RWPE1 (cell line): ENCODE measurements at regions of chr7 and their contacts with region 1.

Region 1: DNA sequence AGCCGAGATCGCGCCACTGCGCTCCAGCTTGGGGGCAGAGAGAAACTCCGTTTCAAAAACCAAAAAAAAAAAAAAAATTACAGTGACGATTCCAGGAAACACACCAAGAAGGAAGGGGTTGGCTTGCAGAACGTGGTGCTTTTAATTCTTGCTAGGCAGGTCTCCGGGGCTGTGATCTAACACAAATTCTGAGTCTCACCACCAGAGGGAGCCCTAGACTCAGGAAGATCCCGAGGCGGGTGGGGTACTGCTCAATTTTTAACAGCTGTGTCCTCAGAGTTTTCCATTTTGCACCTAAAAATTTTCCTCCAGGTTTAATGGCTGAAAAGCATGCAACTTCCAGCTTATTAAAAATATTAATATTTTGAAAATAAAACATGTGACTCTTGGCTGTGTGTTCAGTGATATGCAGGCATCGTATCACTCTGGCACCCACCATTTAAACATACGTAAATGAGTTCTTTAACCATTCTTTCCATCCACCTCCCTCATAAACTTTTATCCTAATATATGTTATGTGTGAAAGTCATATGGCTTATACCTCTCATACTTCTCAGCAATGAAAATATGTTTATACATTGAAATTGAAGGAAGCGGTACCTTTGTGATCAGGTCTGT is 26.5 kb upstream of the NUB1 start:
- DNase-seq: peak; percentile 62
- H3K27ac ChIP-seq: no peak overlapping the region
- CTCF ChIP-seq: peak; percentile 89

Region 2: DNA sequence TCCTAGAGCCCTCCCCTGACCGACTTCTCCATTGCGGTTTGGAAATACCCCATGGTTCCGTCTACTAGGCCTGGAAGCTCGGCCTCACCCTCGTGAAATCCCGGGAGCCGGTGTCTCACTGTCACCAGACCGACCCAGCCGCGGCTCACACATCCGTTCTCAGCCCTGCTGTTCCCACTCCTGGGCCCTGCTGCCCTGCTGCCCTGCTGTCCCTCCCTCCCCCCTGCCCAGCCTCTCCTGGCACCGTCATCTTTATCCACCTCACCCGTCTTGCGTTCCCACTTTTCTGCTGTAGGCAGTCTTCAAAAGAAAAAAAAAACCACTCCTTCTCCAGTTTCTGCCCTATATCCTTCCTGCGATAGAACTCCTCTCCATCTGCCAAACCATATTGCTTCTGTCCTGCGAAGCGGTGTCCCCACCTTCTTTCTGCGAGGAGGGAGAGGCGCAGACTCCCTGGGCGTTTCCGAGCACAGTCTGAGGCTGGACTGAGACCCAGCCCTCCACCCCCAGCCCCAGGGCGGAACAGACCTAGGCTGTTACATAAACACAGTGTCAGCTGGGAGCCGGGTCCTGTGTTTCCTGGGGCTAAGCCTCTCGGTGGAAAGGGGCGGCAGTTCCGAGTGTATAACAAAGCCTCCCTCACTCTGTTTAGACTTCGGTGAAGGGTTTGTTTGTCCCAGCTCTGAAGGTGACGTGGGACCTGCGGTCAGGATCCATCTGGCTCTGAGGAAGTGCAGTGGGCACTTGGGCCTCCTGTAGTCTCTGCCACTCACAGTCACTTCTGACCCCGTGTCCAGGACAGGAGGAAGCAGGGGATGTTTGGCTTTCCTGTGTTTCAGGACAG is 226.1 kb before region 1 on chr7:
- CTCF ChIA-PET with region 1: no interaction called
- POLR2A ChIA-PET with region 1: no interaction called
- DNase-seq: peak; percentile 21
- H3K27ac ChIP-seq: peak overlapping the region; percentile 90
- CTCF ChIP-seq: no peak

Region 3: GRCh38 chr7:151338809-151339208 is 23.7 kb after region 1 on chr7:
- CTCF ChIA-PET with region 1: no interaction called
- POLR2A ChIA-PET with region 1: no interaction called
- DNase-seq: no peak
- H3K27ac ChIP-seq: no peak overlapping the region
- CTCF ChIP-seq: no peak

Region 4: DNA sequence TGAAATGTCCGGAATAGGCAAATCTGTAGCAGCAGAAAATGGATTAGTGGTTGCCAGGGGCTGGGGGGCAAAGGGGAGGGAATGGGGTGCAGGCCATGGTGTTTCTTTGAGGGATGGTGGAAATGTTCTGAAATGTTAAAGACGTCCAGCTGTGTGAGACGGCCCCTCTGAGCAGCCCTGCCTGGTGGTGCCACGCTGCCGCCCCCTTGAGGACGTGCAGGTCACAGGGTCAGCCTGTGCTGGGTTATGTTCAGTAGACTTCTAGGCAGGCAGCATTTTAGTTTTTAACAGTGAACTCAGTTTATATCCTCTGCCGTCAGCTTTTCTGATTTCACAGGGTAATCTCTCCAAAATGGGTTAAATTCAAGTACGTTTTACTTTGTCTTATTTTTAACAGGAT is 35.9 kb after region 1 on chr7:
- CTCF ChIA-PET with region 1: interaction called, 10 read pairs
- POLR2A ChIA-PET with region 1: no interaction called
- DNase-seq: no peak
- H3K27ac ChIP-seq: no peak overlapping the region
- CTCF ChIP-seq: no peak